Activated CD4-positive, alpha-beta T cell treated with anti-CD3 and anti-CD28 coated beads, Interleukin-2, amount 10 ng/mL, durations not matched to agents 24 days and 14 days (primary cell): ENCODE measurements at regions of chr5 and their contacts with region 1.

Region 1: DNA sequence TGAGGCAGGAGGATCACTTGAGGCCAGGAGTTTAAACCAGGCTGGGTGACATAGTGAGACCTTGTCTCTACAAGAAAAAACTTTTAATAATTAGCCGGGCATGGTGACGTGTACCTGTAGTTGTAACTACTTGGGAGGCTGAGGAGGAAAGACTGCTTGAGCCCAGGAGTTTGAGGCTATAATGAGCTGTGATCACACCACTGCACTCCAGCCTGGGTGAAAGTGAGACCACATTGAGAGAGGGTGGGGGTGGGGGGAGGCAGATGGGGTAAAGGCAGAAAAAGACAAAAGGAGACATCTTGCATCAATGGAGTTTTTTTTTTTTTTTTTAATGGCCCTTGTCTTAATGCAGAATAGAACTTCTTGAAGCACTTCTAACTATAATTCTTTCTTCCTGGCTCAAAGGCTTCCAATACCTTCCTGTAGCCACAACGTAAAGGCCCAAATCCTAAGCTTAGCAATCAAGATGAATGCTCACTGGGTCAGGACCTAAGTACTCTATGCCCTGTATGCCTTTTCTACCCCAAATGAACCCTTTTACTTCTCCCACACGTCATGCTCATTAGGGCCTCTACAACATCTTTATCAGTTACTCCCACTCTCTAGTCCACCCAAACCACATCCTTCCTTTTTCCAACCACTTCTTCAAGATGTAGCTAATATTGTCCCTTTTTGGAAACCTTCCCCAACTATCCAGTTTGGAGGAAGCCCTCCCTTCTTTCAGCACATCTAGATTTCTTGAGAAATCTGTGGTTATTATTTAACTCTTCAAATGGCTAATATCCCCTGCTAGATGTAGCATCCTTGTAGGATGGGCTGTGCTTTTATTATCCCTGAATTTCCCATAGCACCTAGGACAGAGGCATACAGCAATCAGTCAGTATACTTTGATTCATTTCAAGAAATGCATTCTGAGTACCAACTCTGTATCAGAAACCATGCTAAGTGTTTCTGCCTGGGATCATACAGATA is 40.8 kb downstream of the CSF2 start:
- DNase-seq: peak; percentile 58
- H3K4me3 Mint-ChIP-seq: peak overlapping the region; percentile 32
- H3K27ac Mint-ChIP-seq: peak overlapping the region; percentile 63
- H3K4me1 Mint-ChIP-seq: peaks cover 56% of the 10 kb centered on the region
- H3K27me3 Mint-ChIP-seq: no peaks in the 10 kb centered on the region

Region 2: GRCh38 chr5:132019857-132020555 is 94.4 kb before region 1 on chr5:
- intact Hi-C with region 1: loop called (anchors 2 kb)
- DNase-seq: peak; percentile 95
- H3K4me3 Mint-ChIP-seq: peak overlapping the region; percentile 49
- H3K27ac Mint-ChIP-seq: peak overlapping the region; percentile 87
- H3K4me1 Mint-ChIP-seq: peaks cover 45% of the 10 kb centered on the region
- H3K27me3 Mint-ChIP-seq: peaks cover 41% of the 10 kb centered on the region

Region 3: GRCh38 chr5:132063090-132063911 is 51.1 kb before region 1 on chr5:
- intact Hi-C with region 1: no loop called
- DNase-seq: peak; percentile 94
- H3K4me3 Mint-ChIP-seq: no peak overlapping the region
- H3K27ac Mint-ChIP-seq: peak overlapping the region; percentile 63
- H3K4me1 Mint-ChIP-seq: peaks cover 62% of the 10 kb centered on the region
- H3K27me3 Mint-ChIP-seq: no peaks in the 10 kb centered on the region

Region 4: GRCh38 chr5:132073231-132074013 is 41.0 kb before region 1 on chr5 and contains the start of gene CSF2:
- intact Hi-C with region 1: loop called (anchors 1 kb)
- DNase-seq: no peak
- H3K4me3 Mint-ChIP-seq: peak within 1 kb of the TSS; percentile 80
- H3K27ac Mint-ChIP-seq: peak within 1 kb of the TSS; percentile 92
- H3K4me1 Mint-ChIP-seq: peaks cover 81% of the 10 kb centered on the region
- H3K27me3 Mint-ChIP-seq: no peaks in the 10 kb centered on the region
- total RNA-seq, gene CSF2: 1,084 and 1,122 TPM in 2 replicates

Region 5: DNA sequence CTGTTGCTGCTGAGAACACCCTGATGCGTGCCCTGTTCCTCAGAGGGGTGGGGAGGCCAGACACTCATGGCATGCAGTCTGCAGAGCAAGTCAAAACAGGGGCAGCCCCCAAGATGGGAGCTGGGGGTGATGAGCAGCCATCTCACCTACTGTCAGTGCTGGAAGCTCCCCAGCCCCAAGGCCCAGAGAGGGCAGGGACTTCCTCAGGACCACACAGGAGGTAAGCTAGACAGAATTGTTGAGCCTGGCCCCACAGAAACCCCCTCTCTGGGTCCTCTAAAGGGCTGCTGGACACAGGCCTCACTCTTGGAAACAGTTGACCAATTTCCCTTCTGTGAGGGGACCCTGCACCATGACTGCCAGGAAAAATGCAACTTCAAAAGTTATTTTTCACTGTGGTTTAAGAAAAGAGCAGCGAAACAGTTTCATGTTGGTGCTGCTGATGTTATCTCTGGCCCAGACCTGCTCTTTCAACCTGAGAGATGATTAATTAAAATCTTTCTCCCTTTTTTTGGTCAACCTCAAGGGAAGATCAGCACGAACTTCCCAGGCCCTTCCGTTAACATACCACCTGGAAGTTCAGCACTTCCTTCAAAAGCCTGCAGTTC is 31.3 kb before region 1 on chr5:
- intact Hi-C with region 1: loop called (anchors 2 kb)
- DNase-seq: peak; percentile 76
- H3K4me3 Mint-ChIP-seq: peak overlapping the region; percentile 42
- H3K27ac Mint-ChIP-seq: peak overlapping the region; percentile 81
- H3K4me1 Mint-ChIP-seq: peaks cover 72% of the 10 kb centered on the region
- H3K27me3 Mint-ChIP-seq: no peaks in the 10 kb centered on the region

Region 6: DNA sequence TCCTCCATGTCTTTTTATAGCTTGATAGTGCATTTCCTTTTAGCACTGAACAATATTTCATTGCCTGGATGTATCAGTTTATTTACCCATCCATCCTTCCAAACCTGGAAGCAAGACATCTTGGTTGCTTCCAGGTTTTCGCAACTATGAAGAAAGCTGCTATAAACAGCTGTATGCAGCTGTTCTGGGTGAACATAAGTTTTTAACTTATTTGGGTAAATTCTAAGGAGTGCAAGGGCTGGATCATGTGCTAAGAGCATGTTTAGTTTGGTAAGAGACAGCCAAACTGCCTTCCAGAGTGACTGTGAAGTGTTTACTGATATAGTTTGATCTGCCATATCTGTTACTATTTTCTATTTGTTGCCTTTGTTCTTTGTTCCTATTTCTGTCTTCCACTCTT is 17.7 kb after region 1 on chr5:
- intact Hi-C with region 1: no loop called
- DNase-seq: no peak
- H3K4me3 Mint-ChIP-seq: no peak overlapping the region
- H3K27ac Mint-ChIP-seq: peak overlapping the region; percentile 5
- H3K4me1 Mint-ChIP-seq: peaks cover 22% of the 10 kb centered on the region
- H3K27me3 Mint-ChIP-seq: peaks cover 23% of the 10 kb centered on the region

Region 7: DNA sequence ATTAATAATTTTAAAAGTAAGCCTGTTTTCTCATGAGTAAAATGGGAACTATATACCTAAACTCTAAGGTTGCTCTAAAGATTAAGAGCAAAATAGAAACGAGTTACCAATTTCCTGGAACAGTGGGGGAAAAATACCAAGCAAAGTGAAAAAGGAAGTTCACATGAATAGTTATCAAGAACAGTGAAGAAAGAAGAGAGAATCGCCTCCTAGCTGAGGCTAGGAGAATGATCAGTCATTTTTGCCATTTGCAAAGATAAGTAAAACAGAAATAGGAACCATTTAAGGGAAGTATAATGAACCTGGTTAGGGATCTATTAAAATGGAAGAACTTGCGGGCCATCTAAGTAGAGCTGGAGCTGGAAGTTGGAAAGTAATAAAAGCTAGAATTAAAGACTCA is 62.6 kb after region 1 on chr5:
- intact Hi-C with region 1: loop called (anchors 1 kb)
- DNase-seq: no peak
- H3K4me3 Mint-ChIP-seq: peak overlapping the region; percentile 71
- H3K27ac Mint-ChIP-seq: peak overlapping the region; percentile 80
- H3K4me1 Mint-ChIP-seq: peaks cover 33% of the 10 kb centered on the region
- H3K27me3 Mint-ChIP-seq: peaks cover 8% of the 10 kb centered on the region